ENCODE measurements at regions of chr2 and their contacts with region 1.

Region 1: DNA sequence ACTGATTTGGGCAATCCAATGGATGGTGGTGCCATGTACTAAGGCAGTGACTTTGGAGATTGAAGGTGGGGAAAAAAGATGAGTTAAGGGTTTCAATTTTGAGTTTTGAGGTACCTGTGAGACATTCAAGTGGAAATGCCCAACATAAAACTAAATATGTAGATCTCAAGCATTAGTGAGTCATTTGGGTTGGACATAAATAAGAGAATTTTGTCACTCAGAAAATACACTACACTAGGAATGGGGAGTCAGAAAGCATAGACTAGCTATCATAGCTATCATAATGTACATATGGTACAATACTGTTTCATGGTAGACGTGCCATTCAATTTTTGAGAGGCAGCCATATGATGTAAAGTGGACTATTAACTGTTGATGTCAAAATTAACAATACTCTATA is 56.1 kb downstream of the FBXO11 start:
- DNase-seq: no peak
- ATAC-seq: no peak
- H3K4me3 ChIP-seq: no peak overlapping the region
- H3K27ac ChIP-seq: no peak overlapping the region
- H3K4me1 ChIP-seq: peaks cover 5% of the 10 kb centered on the region
- H3K27me3 ChIP-seq: no peaks in the 10 kb centered on the region

Region 2: GRCh38 chr2:47664817-47665216 is 185.4 kb before region 1 on chr2:
- intact Hi-C with region 1: no loop called
- DNase-seq: no peak
- ATAC-seq: no peak
- H3K4me3 ChIP-seq: no peak overlapping the region
- H3K27ac ChIP-seq: no peak overlapping the region
- H3K4me1 ChIP-seq: no peaks in the 10 kb centered on the region
- H3K27me3 ChIP-seq: no peaks in the 10 kb centered on the region

Region 3: GRCh38 chr2:47906157-47907038 is 56.2 kb after region 1 on chr2 and contains the start of gene FBXO11:
- intact Hi-C with region 1: loop called in 2 of 4 experiments (anchors 10 kb)
- DNase-seq: peak; percentile 97 to 98 (median 98)
- ATAC-seq: peak; percentile 97 to 98
- H3K4me3 ChIP-seq: peak within 1 kb of the TSS; percentile 92
- H3K27ac ChIP-seq: peak within 1 kb of the TSS; percentile 98
- H3K4me1 ChIP-seq: peaks cover 2% of the 10 kb centered on the region
- H3K27me3 ChIP-seq: no peaks in the 10 kb centered on the region
- total RNA-seq, gene FBXO11: 39.1 to 45.4 (median 42.1) TPM

Region 4: DNA sequence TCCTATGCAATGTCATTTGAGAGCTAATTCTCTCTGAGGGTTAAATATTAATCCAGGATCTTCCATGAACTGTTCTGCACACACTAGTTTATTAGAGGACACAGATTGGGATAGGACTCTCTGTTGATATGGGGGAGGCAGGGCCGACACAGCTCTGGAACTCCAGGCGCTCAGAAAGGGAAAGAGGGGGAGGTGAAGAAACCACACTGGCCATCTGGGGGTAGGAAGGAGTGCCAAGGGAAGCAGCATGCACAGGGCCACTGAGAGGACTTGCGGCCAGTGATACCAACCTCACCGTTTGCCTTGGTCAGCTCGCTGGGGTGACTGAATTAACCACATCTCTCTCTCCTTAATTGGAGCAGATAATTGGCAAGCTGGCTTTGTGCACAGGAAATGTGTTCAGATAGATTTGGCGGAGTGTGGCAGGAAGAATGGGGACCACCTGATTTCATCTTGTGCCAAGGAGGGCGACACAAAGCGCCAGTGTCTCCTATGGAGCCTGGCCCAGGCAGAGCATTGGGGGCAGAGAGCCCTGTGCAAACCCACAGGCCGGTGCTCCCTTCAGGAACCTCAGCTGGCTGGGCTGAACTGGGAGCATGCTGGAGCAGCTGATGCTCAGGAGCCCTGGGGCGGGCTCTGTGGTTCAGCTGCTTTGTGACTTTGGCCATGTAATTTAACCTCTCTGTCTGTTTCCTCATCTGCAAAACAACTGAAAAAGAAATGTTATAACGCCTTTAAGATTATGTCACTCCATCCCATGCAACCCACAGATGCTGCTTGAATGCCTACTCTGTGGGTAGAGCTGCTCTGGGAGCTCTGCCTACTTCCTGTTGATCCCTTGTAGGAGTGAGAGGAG is 565.0 kb after region 1 on chr2:
- intact Hi-C with region 1: loop called in 1 of 4 experiments (anchors 10 kb)
- DNase-seq: peak in 2 of 3 donors; percentile 67 to 70
- ATAC-seq: peak; percentile 60 to 69
- H3K4me3 ChIP-seq: no peak overlapping the region
- H3K27ac ChIP-seq: peak overlapping the region; percentile 57
- H3K4me1 ChIP-seq: peaks cover 13% of the 10 kb centered on the region
- H3K27me3 ChIP-seq: no peaks in the 10 kb centered on the region

Measured in right cardiac atrium (tissue), 5 donors.